ENCODE measurements at regions of chr20 and their contacts with region 1.

Region 1: GRCh38 chr20:51631011-51631950 is 88.8 kb upstream of the NFATC2 start:
- DNase-seq: peak; percentile 100
- H3K4me3 ChIP-seq: no peak overlapping the region
- H3K27ac ChIP-seq: peak overlapping the region; percentile 99
- H3K4me1 ChIP-seq: peaks cover 38% of the 10 kb centered on the region
- H3K27me3 ChIP-seq: no peaks in the 10 kb centered on the region
- CTCF ChIP-seq: no peak
- POLR2A ChIP-seq: peak; percentile 55

Region 2: GRCh38 chr20:51447097-51447771 is 184.0 kb before region 1 on chr20:
- CTCF ChIA-PET with region 1: no interaction called
- POLR2A ChIA-PET with region 1: no interaction called
- dilution Hi-C with region 1: no loop called
- intact Hi-C with region 1: loop called (anchors 1 kb)
- DNase-seq: peak; percentile 95
- H3K4me3 ChIP-seq: peak overlapping the region in 1 of 3 experiments; percentile 3
- H3K27ac ChIP-seq: peak overlapping the region; percentile 83
- H3K4me1 ChIP-seq: peaks cover 20% of the 10 kb centered on the region
- H3K27me3 ChIP-seq: no peaks in the 10 kb centered on the region
- CTCF ChIP-seq: no peak
- POLR2A ChIP-seq: no peak

Region 3: DNA sequence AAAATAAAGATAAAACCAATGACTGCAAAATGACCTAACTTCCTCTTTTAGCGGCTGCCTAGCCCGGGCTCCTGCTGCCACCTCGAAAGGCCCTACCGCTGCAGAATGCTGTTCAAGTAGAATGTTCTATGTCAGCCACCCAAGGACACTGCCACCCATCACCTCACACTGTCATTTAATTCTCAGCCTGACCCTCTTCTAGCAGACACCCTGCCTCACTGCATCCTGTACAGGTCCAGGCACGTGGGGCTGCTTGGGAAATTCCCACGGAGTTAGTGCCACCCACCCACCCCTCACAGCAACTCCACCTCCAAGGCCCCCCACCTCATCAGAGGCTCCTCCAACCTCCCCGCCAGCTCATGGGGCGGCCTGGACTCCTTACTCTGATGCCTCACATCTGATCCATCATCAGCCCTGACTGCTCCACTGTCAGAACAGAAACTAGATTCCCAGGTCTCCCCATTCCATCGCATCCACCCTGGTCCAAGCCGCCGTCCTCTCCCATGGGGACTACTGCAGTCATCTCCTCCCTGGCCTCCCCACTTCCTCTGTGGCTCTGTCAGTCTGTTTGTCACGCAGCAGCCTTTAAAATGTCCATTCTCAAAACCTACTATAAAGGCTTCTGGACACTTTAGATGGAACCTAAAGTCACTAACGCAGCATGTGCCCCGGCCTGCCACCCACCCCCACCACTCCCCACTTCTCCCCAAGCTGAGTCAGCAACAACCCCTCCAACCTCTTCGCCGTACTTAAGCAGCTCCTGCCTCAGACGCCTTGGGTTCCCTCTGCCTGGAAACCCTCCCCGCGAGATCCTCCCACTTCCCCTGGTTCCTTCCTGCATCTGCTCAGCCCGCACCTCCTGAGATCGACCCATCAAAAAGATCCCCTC is 105.8 kb before region 1 on chr20:
- CTCF ChIA-PET with region 1: no interaction called
- POLR2A ChIA-PET with region 1: no interaction called
- dilution Hi-C with region 1: no loop called
- intact Hi-C with region 1: no loop called
- DNase-seq: peak; percentile 45
- H3K4me3 ChIP-seq: no peak overlapping the region
- H3K27ac ChIP-seq: no peak overlapping the region
- H3K4me1 ChIP-seq: peaks cover 10% of the 10 kb centered on the region
- H3K27me3 ChIP-seq: no peaks in the 10 kb centered on the region
- CTCF ChIP-seq: no peak
- POLR2A ChIP-seq: no peak

Region 4: GRCh38 chr20:51579137-51579536 is 52.1 kb before region 1 on chr20:
- CTCF ChIA-PET with region 1: no interaction called
- POLR2A ChIA-PET with region 1: no interaction called
- dilution Hi-C with region 1: no loop called
- intact Hi-C with region 1: no loop called
- DNase-seq: no peak
- H3K4me3 ChIP-seq: no peak overlapping the region
- H3K27ac ChIP-seq: no peak overlapping the region
- H3K4me1 ChIP-seq: no peaks in the 10 kb centered on the region
- H3K27me3 ChIP-seq: peaks cover 2 to 5% of the 10 kb centered on the region in 2 experiments
- CTCF ChIP-seq: no peak
- POLR2A ChIP-seq: no peak

Region 5: GRCh38 chr20:51650685-51651134 is 19.4 kb after region 1 on chr20:
- CTCF ChIA-PET with region 1: no interaction called
- POLR2A ChIA-PET with region 1: no interaction called
- dilution Hi-C with region 1: no loop called
- intact Hi-C with region 1: loop called (anchors 1 kb)
- DNase-seq: peak; percentile 85
- H3K4me3 ChIP-seq: no peak overlapping the region
- H3K27ac ChIP-seq: peak overlapping the region; percentile 21
- H3K4me1 ChIP-seq: peaks cover 24% of the 10 kb centered on the region
- H3K27me3 ChIP-seq: no peaks in the 10 kb centered on the region
- CTCF ChIP-seq: no peak
- POLR2A ChIP-seq: no peak

Region 6: DNA sequence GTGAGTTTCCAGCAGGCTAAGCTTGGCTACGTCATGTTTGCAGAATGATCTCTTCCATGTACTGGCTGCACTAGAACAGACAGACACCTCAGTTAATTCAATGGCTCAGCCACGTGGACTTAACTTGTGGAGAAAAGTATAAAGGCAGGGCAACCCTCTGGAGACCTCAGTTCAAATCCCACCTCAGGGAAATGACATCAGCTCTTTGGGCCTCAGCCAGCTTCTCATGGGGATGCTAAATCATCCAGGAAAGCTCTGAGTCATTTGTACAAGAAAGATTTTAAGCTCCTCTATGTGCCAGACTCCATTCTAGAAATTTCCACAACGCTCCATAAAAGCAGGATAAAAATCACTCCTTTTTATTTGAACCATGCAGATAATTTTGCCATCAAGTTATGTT is 299.5 kb after region 1 on chr20:
- CTCF ChIA-PET with region 1: no interaction called
- POLR2A ChIA-PET with region 1: no interaction called
- dilution Hi-C with region 1: no loop called
- intact Hi-C with region 1: loop called (anchors 1 kb)
- DNase-seq: peak; percentile 95
- H3K4me3 ChIP-seq: no peak overlapping the region
- H3K27ac ChIP-seq: peak overlapping the region; percentile 79
- H3K4me1 ChIP-seq: peaks cover 51% of the 10 kb centered on the region
- H3K27me3 ChIP-seq: no peaks in the 10 kb centered on the region
- CTCF ChIP-seq: no peak
- POLR2A ChIP-seq: no peak

Region 7: GRCh38 chr20:52031563-52032303 is 400.5 kb after region 1 on chr20:
- CTCF ChIA-PET with region 1: no interaction called
- POLR2A ChIA-PET with region 1: no interaction called
- dilution Hi-C with region 1: no loop called
- intact Hi-C with region 1: loop called (anchors 1 kb)
- DNase-seq: peak; percentile 98
- H3K4me3 ChIP-seq: no peak overlapping the region
- H3K27ac ChIP-seq: peak overlapping the region; percentile 95
- H3K4me1 ChIP-seq: peaks cover 28% of the 10 kb centered on the region
- H3K27me3 ChIP-seq: no peaks in the 10 kb centered on the region
- CTCF ChIP-seq: no peak
- POLR2A ChIP-seq: no peak